Activated CD4-positive, alpha-beta T cell treated with anti-CD3 and anti-CD28 coated beads for 36 hours (primary cell): ENCODE measurements at regions of chr6 and their contacts with region 1.

Region 1: GRCh38 chr6:159174263-159174969 is 5.2 kb downstream of the FNDC1 start:
- DNase-seq: peak; percentile 86
- ATAC-seq: peak; percentile 89
- H3K4me3 Mint-ChIP-seq: no peak overlapping the region
- H3K27ac Mint-ChIP-seq: no peak overlapping the region
- H3K4me1 Mint-ChIP-seq: peaks cover 9% of the 10 kb centered on the region
- H3K27me3 Mint-ChIP-seq: peaks cover 50% of the 10 kb centered on the region

Region 2: DNA sequence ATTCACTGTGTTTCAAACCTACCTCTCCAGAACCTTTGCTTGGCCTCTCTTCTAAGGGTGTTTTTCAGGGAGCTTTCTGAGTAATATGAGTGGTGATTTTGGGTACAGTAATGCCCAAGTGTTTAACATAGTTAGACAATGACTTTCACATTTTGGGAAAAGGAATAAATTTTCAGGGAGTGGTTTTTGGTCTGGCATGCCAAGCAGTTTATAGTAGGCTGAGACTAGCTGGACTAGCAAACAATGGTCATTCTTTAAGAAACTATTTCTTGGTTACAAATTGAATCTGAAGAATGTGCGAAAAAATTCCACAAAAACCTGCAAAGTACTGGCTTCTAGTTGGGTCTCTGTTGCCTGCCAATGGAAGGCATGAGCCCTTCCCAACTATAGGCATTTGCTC is 10.1 kb after region 1 on chr6:
- CTCF ChIA-PET with region 1: interaction called, 22 read pairs
- POLR2A ChIA-PET with region 1: no interaction called
- intact Hi-C with region 1: no loop called
- DNase-seq: no peak
- ATAC-seq: no peak
- H3K4me3 Mint-ChIP-seq: no peak overlapping the region
- H3K27ac Mint-ChIP-seq: no peak overlapping the region
- H3K4me1 Mint-ChIP-seq: peaks cover 9% of the 10 kb centered on the region
- H3K27me3 Mint-ChIP-seq: peaks cover 5% of the 10 kb centered on the region

Region 3: GRCh38 chr6:159252955-159253508 is 78.6 kb after region 1 on chr6:
- CTCF ChIA-PET with region 1: interaction called, 3 read pairs
- POLR2A ChIA-PET with region 1: no interaction called
- intact Hi-C with region 1: loop called (anchors 5 to 10 kb)
- DNase-seq: peak; percentile 14
- ATAC-seq: peak; percentile 53
- H3K4me3 Mint-ChIP-seq: no peak overlapping the region
- H3K27ac Mint-ChIP-seq: no peak overlapping the region
- H3K4me1 Mint-ChIP-seq: no peaks in the 10 kb centered on the region
- H3K27me3 Mint-ChIP-seq: peaks cover 11% of the 10 kb centered on the region

Region 4: DNA sequence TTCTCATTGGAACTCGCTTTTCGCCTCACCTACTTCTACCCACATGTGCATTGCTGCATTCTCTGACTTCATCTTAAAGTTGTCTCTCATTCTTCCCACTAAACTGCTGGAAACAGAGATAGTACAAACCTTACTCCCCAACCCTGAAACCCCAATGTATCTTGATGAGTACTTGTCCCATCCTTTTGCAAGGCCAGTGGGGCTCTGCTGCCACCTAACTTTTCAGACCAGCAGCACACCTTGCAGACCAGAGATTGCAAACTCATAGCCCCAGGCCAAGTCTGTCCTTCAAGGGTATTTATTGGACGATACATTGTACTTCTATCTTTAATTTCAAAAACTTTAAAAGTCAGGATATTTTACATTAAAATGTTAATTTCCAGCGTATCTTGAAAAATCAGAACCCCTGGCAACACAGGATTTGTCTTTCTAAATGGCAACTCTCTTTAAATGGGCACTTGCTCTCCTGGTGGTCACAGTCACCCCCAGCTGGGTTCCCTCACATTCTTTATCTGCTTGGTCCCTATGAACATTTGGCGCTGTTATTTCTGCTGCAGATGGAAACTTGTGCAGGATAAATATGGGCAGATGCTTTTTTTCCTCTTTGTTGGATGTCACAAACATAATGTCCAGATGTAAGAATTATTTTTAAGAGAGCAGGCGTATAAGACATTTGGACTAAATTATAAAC is 434.7 kb after region 1 on chr6:
- CTCF ChIA-PET with region 1: interaction called, 4 read pairs
- POLR2A ChIA-PET with region 1: no interaction called
- intact Hi-C with region 1: loop called in 1 of 2 experiments (anchors 1 kb)
- DNase-seq: peak; percentile 50
- ATAC-seq: no peak
- H3K4me3 Mint-ChIP-seq: no peak overlapping the region
- H3K27ac Mint-ChIP-seq: no peak overlapping the region
- H3K4me1 Mint-ChIP-seq: no peaks in the 10 kb centered on the region
- H3K27me3 Mint-ChIP-seq: peaks cover 2% of the 10 kb centered on the region

Region 5: DNA sequence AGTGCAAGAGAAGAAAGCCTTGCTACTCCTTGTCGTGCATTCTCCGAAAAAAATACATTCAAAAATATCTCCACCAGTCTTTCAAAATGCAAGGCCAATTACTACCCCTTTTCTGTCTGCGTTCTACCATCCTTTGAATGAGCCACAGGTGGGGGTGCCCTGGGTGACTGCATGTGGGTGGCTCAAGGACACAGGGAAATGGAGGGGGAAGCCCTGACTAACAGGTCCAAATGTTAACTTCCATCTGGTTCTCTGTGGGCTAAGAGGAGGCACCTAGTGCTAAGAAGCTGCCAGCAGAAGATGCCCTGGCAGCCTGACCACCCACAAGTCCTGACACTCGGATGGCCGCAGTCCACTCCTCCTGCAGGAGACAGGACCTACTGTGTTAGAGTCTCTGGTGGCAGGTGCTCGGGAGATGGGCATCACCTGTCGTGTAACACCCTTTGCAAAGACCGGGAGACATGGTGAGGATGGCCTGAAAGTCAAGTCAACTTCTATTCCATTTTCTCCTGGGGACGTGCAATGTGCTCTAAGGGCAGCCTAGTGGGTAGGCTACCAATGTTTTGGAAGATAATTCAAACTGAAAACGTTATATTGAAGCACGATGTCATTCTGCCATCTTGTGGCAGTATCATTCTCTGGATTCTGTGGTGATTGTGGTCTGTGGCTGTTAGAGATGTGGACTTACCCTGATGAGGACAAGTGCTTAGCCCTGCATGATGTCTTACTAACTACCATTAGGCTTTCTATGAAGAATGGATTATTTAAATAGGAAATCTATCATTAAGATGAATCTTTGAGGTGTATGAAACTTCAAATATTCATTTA is 767.1 kb after region 1 on chr6:
- CTCF ChIA-PET with region 1: no interaction called
- POLR2A ChIA-PET with region 1: no interaction called
- intact Hi-C with region 1: loop called in 1 of 2 experiments (anchors 5 kb)
- DNase-seq: peak; percentile 50
- ATAC-seq: peak; percentile 97
- H3K4me3 Mint-ChIP-seq: no peak overlapping the region
- H3K27ac Mint-ChIP-seq: no peak overlapping the region
- H3K4me1 Mint-ChIP-seq: peaks cover 2% of the 10 kb centered on the region
- H3K27me3 Mint-ChIP-seq: no peaks in the 10 kb centered on the region